IMR-90 (cell line): ENCODE measurements at regions of chr6 and their contacts with region 1.

Region 1: DNA sequence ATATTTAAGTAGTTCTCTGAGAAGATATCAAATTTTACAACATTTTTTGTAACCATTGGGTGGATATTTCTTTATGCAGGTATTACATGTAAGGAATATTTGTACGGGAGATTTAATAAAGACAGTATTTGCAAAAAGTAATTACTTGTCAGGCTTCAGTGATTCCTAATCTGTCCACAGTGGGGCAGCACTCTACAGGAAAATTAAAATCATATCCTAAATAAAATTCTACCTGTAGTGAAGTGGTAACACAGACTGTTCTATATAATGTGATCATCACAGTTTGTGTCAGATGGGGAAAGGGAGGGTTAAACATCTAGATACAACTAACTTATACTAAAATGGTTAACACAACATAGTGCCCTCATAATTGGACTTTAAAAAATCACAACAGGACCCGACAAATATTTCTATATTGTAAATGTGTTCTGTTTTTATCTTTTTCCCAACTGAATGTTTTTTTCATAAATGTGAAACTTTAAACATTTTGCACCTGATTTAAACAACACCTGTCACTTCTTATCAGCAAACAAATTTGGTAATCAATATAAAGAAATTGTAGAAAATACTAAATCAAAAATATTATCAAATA is 145.6 kb upstream of the MANEA start:
- DNase-seq: peak; percentile 40
- ATAC-seq: peak; percentile 71
- H3K4me3 ChIP-seq: no peak overlapping the region
- H3K27ac ChIP-seq: no peak overlapping the region
- H3K4me1 ChIP-seq: no peaks in the 10 kb centered on the region
- H3K27me3 ChIP-seq: no peaks in the 10 kb centered on the region
- CTCF ChIP-seq: peak; percentile 68
- POLR2A ChIP-seq: no peak
- RAD21 ChIP-seq: peak; percentile 61

Region 2: DNA sequence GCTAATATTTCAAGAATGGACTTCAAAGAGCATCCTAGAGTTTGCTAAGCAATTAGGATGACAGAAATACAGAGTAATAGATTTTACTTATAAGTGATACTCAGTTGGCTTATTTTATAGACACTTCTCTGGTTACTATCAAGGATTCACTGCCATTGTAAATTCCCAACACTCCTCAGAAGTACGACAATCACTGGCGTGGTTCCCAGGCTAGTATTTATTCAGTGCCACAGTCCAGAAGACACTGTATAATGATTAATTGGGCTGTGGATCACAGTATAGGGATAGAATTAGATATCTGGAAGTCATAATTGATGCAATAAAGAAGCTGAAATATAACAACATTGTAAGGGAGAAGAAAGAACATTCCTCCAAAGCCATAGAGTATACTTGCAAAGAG is 161.3 kb after region 1 on chr6:
- CTCF ChIA-PET with region 1: no interaction called
- POLR2A ChIA-PET with region 1: no interaction called
- dilution Hi-C with region 1: no loop called
- in situ Hi-C with region 1: no loop called
- intact Hi-C with region 1: no loop called
- DNase-seq: no peak
- ATAC-seq: no peak
- H3K4me3 ChIP-seq: no peak overlapping the region
- H3K27ac ChIP-seq: no peak overlapping the region
- H3K4me1 ChIP-seq: no peaks in the 10 kb centered on the region
- H3K27me3 ChIP-seq: no peaks in the 10 kb centered on the region
- CTCF ChIP-seq: no peak
- POLR2A ChIP-seq: no peak
- RAD21 ChIP-seq: no peak

Region 3: GRCh38 chr6:96470296-96470695 is 1038.6 kb after region 1 on chr6:
- CTCF ChIA-PET with region 1: no interaction called
- POLR2A ChIA-PET with region 1: no interaction called
- dilution Hi-C with region 1: no loop called
- in situ Hi-C with region 1: no loop called
- intact Hi-C with region 1: loop called (anchors 1 kb)
- DNase-seq: no peak
- ATAC-seq: no peak
- H3K4me3 ChIP-seq: no peak overlapping the region
- H3K27ac ChIP-seq: no peak overlapping the region
- H3K4me1 ChIP-seq: no peaks in the 10 kb centered on the region
- H3K27me3 ChIP-seq: no peaks in the 10 kb centered on the region
- CTCF ChIP-seq: no peak
- POLR2A ChIP-seq: no peak
- RAD21 ChIP-seq: no peak

Region 4: GRCh38 chr6:96521644-96522464 is 1090.1 kb after region 1 on chr6 and contains the start of gene UFL1:
- CTCF ChIA-PET with region 1: no interaction called
- POLR2A ChIA-PET with region 1: no interaction called
- dilution Hi-C with region 1: no loop called
- in situ Hi-C with region 1: no loop called
- intact Hi-C with region 1: loop called (anchors 2 kb)
- DNase-seq: peak; percentile 90
- ATAC-seq: peak; percentile 99
- H3K4me3 ChIP-seq: peak within 1 kb of the TSS; percentile 83
- H3K27ac ChIP-seq: peak within 1 kb of the TSS; percentile 98
- H3K4me1 ChIP-seq: peaks cover 2% of the 10 kb centered on the region; the same call in 1 of the 2 replicates
- H3K27me3 ChIP-seq: no peaks in the 10 kb centered on the region
- CTCF ChIP-seq: no peak
- POLR2A ChIP-seq: peak; percentile 96
- RAD21 ChIP-seq: no peak
- total RNA-seq, gene UFL1: 19.2 and 32.8 TPM in 2 replicates